ENCODE measurements at regions of chr17 and their contacts with region 1.

Region 1: DNA sequence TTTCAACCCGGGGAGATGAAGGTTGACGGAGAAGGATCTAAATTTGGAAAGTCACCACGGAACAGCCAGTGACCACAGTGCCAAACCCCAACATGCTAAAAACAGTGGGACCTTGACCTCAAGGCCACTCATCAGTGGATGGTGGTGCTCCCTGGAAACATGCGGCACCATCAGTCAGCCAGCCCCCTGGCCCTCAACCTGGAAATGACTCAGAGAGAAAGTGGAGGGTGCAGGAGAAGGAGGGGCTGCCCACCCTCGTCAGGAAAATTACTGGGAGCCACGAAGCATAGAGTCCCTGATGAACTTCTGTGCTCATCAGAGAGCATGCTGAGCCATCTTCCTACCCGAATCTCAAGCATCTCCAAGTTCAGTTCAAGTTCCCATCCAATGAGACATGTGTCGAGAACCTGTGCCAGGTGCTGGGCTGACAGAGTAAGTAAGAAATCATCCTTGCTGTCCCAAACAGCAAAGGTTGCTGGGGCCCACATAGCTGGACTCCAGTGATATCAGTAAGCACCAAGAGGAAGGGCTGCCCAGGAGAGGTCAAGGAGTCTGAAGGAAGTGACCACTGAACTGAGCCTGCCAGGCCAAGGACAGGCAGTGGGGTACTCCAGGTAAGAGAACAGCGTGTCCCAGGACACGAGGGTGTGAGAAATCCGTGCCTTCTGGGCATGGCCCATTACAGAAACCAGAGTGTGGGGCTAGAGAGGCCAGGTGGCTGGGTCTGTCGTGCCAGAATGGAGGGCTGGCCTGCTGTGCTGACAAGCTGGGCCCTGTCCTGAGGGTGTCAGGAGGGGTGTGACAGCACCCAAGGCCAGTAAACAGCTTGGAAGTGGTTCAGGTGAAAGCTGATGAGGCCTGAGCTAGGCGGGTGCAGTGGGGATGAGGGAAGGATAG is 5.2 kb downstream of the PECAM1 start:
- DNase-seq: peak in 1 of 2 donors; percentile 34
- H3K4me3 ChIP-seq: peak overlapping the region in 2 of 3 donors; percentile 42 to 51
- H3K27ac ChIP-seq: peak overlapping the region; percentile 70 to 88
- H3K4me1 ChIP-seq: no peaks in the 10 kb centered on the region
- H3K27me3 ChIP-seq: no peaks in the 10 kb centered on the region
- CTCF ChIP-seq: no peak
- POLR2A ChIP-seq: no peak

Region 2: DNA sequence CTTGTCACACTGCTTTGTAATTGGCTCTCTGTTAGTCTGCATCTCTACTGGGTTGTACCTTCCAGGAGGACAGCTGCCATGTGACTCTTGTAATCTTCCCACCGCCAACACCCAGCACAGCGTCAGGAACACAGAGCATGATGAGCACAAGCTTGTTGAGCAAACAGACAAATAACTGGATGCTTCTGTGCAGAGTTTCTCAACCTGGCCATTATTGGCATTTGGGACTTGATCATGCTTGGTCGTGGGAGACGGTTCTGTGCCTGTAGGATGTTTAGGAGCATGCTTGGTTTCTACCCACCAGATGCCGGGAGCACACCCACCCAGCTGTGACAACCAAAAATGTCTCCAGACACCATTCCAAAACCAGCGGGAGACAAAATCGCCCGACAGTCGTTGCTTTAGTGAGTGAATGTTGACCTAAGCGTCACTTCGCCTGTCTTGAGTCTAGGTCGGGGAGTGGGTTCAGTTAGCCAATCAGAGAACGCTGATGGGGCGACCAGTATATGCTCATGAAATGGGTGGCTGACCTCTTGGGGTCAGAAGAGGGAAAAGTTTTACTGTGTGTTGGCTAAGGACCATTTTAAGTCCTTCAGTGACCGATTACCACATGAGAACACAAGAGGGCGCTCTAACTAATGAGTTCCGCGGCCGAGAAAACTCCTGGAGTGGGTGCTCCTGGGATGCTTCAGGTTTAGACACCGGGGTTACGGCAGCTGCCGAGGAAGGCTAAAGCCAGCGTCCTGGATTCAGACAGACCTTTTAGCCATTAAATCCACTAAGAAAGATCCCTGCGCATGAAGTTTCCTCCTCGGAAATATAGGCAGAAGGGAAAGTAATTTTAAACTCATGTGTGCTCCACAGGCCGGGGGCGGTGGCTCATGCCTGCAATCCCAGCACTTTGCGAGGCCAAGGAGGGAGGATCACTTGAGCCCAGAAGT is 64.6 kb before region 1 on chr17:
- intact Hi-C with region 1: loop called (anchors 10 kb)
- DNase-seq: peak in 1 of 2 donors; percentile 47
- H3K4me3 ChIP-seq: peak overlapping the region in 1 of 3 donors; percentile 52
- H3K27ac ChIP-seq: peak overlapping the region; percentile 17 to 78
- H3K4me1 ChIP-seq: no peaks in the 10 kb centered on the region
- H3K27me3 ChIP-seq: no peaks in the 10 kb centered on the region
- CTCF ChIP-seq: peak; percentile 80 to 83 (median 83)
- POLR2A ChIP-seq: no peak

Region 3: GRCh38 chr17:64357191-64357981 is 28.0 kb before region 1 on chr17:
- intact Hi-C with region 1: loop called (anchors 2 kb)
- DNase-seq: peak in 1 of 2 donors; percentile 53
- H3K4me3 ChIP-seq: no peak overlapping the region
- H3K27ac ChIP-seq: peak overlapping the region; percentile 65 to 83
- H3K4me1 ChIP-seq: peaks cover 10 to 14% of the 10 kb centered on the region in 2 donors
- H3K27me3 ChIP-seq: no peaks in the 10 kb centered on the region
- CTCF ChIP-seq: no peak
- POLR2A ChIP-seq: no peak